Ascending aorta (tissue), 2 donors: ENCODE measurements at regions of chr18 and their contacts with region 1.

Region 1: DNA sequence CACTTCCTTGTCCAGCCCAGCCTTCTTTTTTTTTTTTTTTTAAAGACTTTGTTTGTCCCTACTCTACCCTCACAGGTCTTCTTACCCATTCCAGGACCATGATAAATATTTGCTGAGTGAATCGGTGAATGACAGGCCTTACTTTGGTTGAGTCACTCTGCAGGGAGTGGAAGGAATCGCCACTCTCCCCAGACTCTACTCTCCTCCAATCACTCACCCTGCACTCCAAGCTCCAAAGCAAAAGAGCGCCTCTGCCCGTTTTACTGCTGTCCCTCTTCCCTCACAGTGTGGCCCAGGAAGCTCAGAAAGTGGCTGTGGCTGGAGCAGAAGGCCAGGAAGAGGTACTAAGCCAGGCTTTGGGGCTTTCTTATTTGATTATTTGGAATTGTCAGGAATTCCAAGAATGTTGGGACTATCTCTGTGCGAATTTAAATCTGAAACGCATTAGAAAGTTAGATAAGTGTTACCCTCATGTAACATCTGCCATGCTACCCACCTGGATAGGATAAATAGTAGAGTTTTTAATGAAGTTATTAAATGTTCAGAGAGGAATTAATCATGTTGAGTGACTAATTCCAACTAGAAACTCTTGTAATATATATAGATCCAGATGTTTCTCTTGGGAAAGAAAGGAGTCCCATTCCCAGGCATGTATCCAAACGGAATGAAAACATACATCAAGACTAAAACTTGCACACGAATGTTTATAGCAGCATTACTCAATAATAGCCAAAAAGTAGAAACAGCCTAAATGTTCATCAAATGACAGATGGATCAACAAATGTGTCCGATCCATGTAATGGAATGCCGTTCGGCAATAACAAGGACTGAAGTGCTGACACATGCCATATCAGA is 43.0 kb upstream of the CHMP1B start:
- DNase-seq: no peak
- H3K4me3 ChIP-seq: no peak overlapping the region
- H3K27ac ChIP-seq: no peak overlapping the region
- H3K4me1 ChIP-seq: no peaks in the 10 kb centered on the region
- H3K27me3 ChIP-seq: no peaks in the 10 kb centered on the region
- CTCF ChIP-seq: no peak

Region 2: GRCh38 chr18:11741505-11742145 is 66.6 kb before region 1 on chr18:
- intact Hi-C with region 1: no loop called
- DNase-seq: no peak
- H3K4me3 ChIP-seq: no peak overlapping the region
- H3K27ac ChIP-seq: no peak overlapping the region
- H3K4me1 ChIP-seq: no peaks in the 10 kb centered on the region
- H3K27me3 ChIP-seq: no peaks in the 10 kb centered on the region
- CTCF ChIP-seq: peak in 2 of 3 experiments; percentile 23 to 44

Region 3: DNA sequence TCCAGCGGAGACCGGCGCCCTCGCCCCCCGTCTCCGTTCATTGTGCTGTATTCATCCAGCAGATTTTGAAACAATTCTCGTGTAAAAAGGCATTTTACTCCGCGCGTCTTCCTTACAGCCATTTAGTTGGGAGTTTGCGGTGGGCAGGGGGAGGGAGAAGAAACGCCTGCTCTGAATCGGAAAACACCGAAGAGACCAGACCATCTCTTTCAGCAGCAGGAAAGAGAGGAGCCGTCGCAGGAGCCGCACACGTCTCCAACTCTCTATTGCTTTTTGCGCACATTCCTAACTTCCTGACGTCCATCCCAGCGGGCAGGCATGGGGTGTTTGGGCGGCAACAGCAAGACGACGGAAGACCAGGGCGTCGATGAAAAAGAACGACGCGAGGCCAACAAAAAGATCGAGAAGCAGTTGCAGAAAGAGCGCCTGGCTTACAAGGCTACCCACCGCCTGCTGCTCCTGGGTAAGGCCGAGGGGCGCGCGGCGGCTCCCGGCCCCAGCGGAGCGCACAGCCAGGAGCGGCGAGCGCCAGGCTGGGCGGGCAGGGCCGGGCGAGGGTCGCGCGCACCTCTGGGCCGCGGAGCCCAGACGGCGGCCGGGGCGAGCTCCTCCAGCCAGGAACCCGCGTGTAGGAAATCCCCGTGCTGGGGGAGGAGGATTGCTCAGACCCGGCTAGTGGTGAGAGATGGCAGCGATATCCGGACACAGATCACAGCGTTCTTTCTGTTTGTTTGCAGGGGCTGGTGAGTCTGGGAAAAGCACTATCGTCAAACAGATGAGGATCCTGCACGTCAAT is 55.9 kb before region 1 on chr18:
- intact Hi-C with region 1: loop called (anchors 10 kb)
- DNase-seq: no peak
- H3K4me3 ChIP-seq: peak overlapping the region; percentile 47 to 49
- H3K27ac ChIP-seq: no peak overlapping the region
- H3K4me1 ChIP-seq: peaks cover 0 to 7% of the 10 kb centered on the region in 2 donors
- H3K27me3 ChIP-seq: no peaks in the 10 kb centered on the region
- CTCF ChIP-seq: no peak